ENCODE measurements at regions of chr16 and their contacts with region 1.

Region 1: GRCh38 chr16:21194771-21195301 is 16.5 kb downstream of the ZP2 start:
- DNase-seq: no peak
- ATAC-seq: no peak
- H3K4me3 ChIP-seq: no peak overlapping the region
- H3K27ac ChIP-seq: no peak overlapping the region
- H3K4me1 ChIP-seq: no peaks in the 10 kb centered on the region
- H3K27me3 ChIP-seq: peaks cover 28% of the 10 kb centered on the region
- CTCF ChIP-seq: no peak

Region 2: DNA sequence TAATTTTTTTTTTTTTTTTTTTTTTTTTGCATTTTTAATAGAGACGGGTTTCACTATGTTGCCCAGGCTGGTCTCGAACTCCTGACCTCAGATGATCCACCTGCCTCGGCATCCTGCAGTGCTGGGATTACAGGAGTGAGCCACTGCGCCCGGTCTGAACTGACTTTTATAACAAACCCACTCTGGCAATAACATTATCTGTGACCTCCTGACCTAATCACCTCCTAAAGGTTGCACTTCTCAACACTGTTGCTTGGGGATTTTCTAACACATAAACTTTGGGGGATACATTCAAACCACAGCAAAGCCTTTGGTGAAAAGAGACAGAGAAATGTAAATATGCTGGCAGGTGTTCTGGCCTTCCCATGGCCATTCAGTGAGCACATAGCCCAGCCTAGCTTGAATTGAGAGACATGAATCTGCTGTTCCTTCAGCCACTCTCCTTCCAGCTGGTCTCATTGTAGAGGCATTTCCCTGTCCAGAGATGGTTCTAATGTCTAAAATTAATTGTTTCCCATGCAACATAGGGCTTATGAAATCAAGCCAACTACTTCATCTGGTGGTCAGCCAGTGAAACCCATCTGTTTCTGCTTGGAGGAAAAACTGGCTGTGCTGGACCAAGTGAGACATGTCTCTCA is 265.9 kb before region 1 on chr16:
- CTCF ChIA-PET with region 1: no interaction called
- POLR2A ChIA-PET with region 1: no interaction called
- intact Hi-C with region 1: no loop called
- DNase-seq: no peak
- ATAC-seq: no peak
- H3K4me3 ChIP-seq: no peak overlapping the region
- H3K27ac ChIP-seq: no peak overlapping the region
- H3K4me1 ChIP-seq: no peaks in the 10 kb centered on the region
- H3K27me3 ChIP-seq: no peaks in the 10 kb centered on the region
- CTCF ChIP-seq: no peak

Region 3: GRCh38 chr16:21134053-21134452 is 60.8 kb before region 1 on chr16:
- CTCF ChIA-PET with region 1: no interaction called
- POLR2A ChIA-PET with region 1: interaction called, 22 read pairs
- intact Hi-C with region 1: no loop called
- DNase-seq: no peak
- ATAC-seq: no peak
- H3K4me3 ChIP-seq: no peak overlapping the region
- H3K27ac ChIP-seq: no peak overlapping the region
- H3K4me1 ChIP-seq: no peaks in the 10 kb centered on the region
- H3K27me3 ChIP-seq: peaks cover 14% of the 10 kb centered on the region; the same call in 1 of the 2 replicates
- CTCF ChIP-seq: no peak

Region 4: DNA sequence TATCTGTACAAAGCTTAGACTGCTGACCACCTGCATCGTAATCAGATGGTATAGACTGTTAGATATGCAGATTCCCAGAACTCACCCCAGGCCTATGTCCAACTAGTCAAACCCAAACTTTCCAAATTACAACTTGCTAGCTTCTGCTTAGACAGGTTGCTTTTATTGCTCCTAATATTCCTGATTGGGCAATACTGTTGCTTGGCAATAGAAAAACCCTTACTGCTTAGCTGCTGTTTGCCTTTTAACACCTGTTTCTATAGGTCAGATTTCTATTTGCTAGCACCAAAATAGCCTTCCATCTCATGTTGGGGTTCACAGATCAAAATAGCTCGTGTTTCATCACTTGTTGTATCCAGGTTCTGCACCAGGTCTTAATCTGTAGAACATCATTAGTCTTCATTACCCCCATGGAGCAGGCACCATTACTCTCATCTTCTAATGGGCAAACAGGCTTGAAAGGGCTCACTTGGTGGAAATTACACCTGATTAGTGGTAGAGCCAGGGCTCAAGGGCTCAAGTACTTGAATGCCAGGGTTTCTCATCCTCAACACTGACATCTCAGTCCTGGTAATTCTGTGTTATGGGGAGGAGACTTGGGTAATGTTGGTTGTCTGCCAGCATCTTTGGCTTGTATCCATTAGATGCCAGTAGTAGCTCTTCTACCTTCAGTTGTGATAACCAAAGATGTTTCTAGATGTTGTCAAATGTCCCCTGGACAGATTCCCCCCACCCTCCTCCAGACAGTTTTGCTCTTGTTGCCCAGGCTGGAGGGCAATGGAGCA is 13.8 kb after region 1 on chr16:
- CTCF ChIA-PET with region 1: no interaction called
- POLR2A ChIA-PET with region 1: no interaction called
- intact Hi-C with region 1: no loop called
- DNase-seq: no peak
- ATAC-seq: no peak
- H3K4me3 ChIP-seq: no peak overlapping the region
- H3K27ac ChIP-seq: no peak overlapping the region
- H3K4me1 ChIP-seq: no peaks in the 10 kb centered on the region
- H3K27me3 ChIP-seq: peaks cover 8% of the 10 kb centered on the region
- CTCF ChIP-seq: no peak

Region 5: DNA sequence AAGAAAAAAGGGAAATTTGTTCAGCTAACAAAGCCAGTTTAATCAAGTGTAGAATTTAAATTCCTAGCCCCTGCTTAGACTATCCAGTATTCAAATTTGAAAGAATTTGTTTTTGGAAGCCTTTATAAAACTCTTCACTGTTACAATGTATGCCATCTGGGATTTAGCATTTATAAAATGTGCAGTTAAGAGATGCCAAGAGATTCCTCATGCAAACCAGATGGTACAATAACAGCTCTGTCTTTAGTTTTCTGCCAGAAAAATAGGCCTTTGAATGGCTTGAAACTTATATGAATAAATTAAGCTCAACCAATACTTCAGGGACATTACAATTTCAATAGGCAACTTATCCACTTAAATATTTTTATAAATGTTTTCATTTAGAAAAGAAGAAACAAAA is 31.9 kb after region 1 on chr16:
- CTCF ChIA-PET with region 1: no interaction called
- POLR2A ChIA-PET with region 1: interaction called, 18 read pairs
- intact Hi-C with region 1: no loop called
- DNase-seq: no peak
- ATAC-seq: no peak
- H3K4me3 ChIP-seq: no peak overlapping the region
- H3K27ac ChIP-seq: no peak overlapping the region
- H3K4me1 ChIP-seq: no peaks in the 10 kb centered on the region
- H3K27me3 ChIP-seq: peaks cover 75% of the 10 kb centered on the region
- CTCF ChIP-seq: no peak